H1 (cell line): ENCODE measurements at regions of chr14 and their contacts with region 1.

Region 1: GRCh38 chr14:52729925-52730667 is at the start of gene STYX:
- DNase-seq: peak; percentile 94 to 97
- H3K4me3 ChIP-seq: peak within 1 kb of the TSS; percentile 91 to 97 (median 94)
- H3K27ac ChIP-seq: peak within 1 kb of the TSS; percentile 79
- H3K4me1 ChIP-seq: peaks cover 0 to 4% (median 3%) of the 10 kb centered on the region in 4 experiments; a peak in 4 of 7 replicates
- H3K27me3 ChIP-seq: no peaks in the 10 kb centered on the region
- CTCF ChIP-seq: peak in 1 of 3 experiments; percentile 2; a peak in 1 of 4 replicates
- EP300 ChIP-seq: no peak
- POLR2A ChIP-seq: peak; percentile 91 to 94
- RAD21 ChIP-seq: 0 out of 4 replicates have a peak, but pooled peaks of 1 of the 2 experiments have one; percentile 3
- total RNA-seq, gene STYX: 26.6 and 29.0 TPM in 2 replicates

Region 2: DNA sequence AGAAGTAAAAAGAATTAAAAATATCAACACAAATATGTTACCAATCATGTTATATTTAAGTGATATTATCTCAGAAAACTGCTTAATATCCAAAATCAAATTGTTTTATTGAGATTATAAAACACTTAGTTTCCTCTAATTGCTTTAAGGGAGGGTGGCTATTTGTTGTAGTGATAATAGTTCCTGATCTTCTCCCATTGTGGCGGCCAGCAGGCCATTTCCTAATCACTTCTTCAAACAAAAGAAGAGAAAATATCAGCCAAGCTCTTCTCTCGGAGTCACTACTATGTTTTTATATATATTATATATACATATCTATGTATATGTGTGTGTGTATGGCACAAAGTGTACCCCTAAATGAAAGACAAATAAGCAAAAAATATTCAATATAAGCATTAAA is 66.2 kb before region 1 on chr14:
- CTCF ChIA-PET with region 1: no interaction called
- POLR2A ChIA-PET with region 1: no interaction called
- DNase-seq: peak in 1 of 2 experiments; percentile 17
- H3K4me3 ChIP-seq: no peak overlapping the region
- H3K27ac ChIP-seq: no peak overlapping the region
- H3K4me1 ChIP-seq: no peaks in the 10 kb centered on the region
- H3K27me3 ChIP-seq: no peaks in the 10 kb centered on the region
- CTCF ChIP-seq: no peak
- EP300 ChIP-seq: no peak
- POLR2A ChIP-seq: no peak
- RAD21 ChIP-seq: no peak

Region 3: GRCh38 chr14:52695481-52696091 is 34.5 kb before region 1 on chr14 and contains the start of gene ERO1A:
- CTCF ChIA-PET with region 1: interaction called, 3 read pairs
- POLR2A ChIA-PET with region 1: interaction called, 10 read pairs
- DNase-seq: peak in 1 of 2 experiments; percentile 82
- H3K4me3 ChIP-seq: peak within 1 kb of the TSS; percentile 83 to 94 (median 88)
- H3K27ac ChIP-seq: peak within 1 kb of the TSS; percentile 54; the same call in 1 of the 2 replicates
- H3K4me1 ChIP-seq: peaks cover 0 to 3% (median 0%) of the 10 kb centered on the region in 4 experiments; a peak in 2 of 7 replicates
- H3K27me3 ChIP-seq: no peaks in the 10 kb centered on the region
- CTCF ChIP-seq: no peak
- EP300 ChIP-seq: peak in 1 of 2 experiments; percentile 40; a peak in 1 of 3 replicates
- POLR2A ChIP-seq: peak in 1 of 2 experiments; percentile 43; a peak in 2 of 3 replicates
- RAD21 ChIP-seq: no peak
- total RNA-seq, gene ERO1A: 36.5 and 42.0 TPM in 2 replicates

Region 4: DNA sequence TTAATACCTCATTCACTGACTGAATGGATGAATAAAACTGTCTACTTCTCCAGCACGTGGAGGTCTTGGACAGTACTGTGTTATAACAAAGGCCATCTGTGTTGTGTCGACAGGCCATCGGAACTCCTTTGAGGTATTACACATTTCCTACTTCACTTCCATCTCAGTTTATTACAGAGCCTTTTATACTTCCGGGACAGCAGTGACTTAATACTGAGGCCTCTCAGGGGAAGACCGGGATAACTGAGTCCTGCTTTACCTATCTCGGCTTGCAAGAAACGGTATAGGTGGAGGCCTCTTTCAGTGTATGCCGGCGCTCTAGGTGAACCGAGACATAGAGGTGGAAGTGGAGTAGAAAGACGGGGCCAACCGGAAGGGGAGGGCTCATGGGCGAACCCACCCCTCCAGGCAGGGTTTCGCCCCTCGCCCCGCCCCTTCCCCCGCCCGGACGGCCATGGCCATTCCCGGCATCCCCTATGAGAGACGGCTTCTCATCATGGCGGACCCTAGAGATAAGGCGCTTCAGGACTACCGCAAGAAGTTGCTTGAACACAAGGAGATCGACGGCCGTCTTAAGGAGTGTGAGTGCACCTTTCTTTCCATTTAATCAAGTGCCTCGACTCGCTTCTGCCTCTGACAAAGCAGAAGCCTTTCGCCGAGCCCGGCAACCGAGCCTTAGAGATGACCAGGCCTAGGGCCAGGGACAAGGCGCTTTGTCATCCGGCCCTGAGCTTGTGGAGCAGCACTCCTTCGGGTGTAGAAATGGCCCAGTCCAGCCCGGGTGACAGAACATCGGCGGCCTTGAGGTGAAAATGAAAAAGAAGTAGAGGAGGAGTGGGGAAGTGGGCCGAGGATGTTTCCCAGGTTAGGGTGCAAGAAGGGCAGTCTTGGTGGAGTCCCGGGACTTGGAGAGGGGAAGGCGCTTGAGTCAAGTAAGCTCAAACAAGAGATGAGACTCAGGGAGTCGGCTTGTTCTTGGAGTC is 23.1 kb before region 1 on chr14 and contains the start of gene PSMC6:
- CTCF ChIA-PET with region 1: interaction called, 5 read pairs
- POLR2A ChIA-PET with region 1: interaction called, 17 read pairs
- DNase-seq: peak; percentile 68 to 92
- H3K4me3 ChIP-seq: peak within 1 kb of the TSS; percentile 85 to 99 (median 94)
- H3K27ac ChIP-seq: peak within 1 kb of the TSS; percentile 94
- H3K4me1 ChIP-seq: peaks cover 0 to 3% (median 1%) of the 10 kb centered on the region in 4 experiments; a peak in 1 of 7 replicates
- H3K27me3 ChIP-seq: no peaks in the 10 kb centered on the region
- CTCF ChIP-seq: no peak
- EP300 ChIP-seq: no peak
- POLR2A ChIP-seq: peak; percentile 58 to 95
- RAD21 ChIP-seq: no peak
- total RNA-seq, gene PSMC6: 103 and 107 TPM in 2 replicates

Region 5: DNA sequence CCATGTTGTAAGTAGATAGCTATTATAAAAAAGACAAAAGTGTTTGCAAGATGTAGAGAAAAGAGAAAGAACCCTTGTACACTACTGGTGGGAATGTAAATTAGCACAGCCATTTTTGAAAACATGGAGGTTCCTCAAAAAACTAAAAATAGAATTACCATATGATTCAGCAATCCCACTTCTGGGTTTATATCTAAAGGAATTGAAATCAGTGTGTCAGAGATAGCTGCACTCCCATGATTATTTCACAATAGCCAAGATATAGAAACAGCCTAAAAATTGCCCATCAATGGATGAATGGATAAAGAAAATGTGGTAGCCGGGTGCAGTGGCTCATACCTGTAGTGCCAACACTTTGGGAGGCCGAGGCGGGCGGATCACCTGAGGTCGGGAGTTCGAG is 13.9 kb before region 1 on chr14:
- CTCF ChIA-PET with region 1: interaction called, 5 read pairs
- POLR2A ChIA-PET with region 1: interaction called, 12 read pairs
- DNase-seq: no peak
- H3K4me3 ChIP-seq: no peak overlapping the region
- H3K27ac ChIP-seq: no peak overlapping the region
- H3K4me1 ChIP-seq: no peaks in the 10 kb centered on the region
- H3K27me3 ChIP-seq: no peaks in the 10 kb centered on the region
- CTCF ChIP-seq: no peak
- EP300 ChIP-seq: no peak
- POLR2A ChIP-seq: no peak
- RAD21 ChIP-seq: no peak

Region 6: DNA sequence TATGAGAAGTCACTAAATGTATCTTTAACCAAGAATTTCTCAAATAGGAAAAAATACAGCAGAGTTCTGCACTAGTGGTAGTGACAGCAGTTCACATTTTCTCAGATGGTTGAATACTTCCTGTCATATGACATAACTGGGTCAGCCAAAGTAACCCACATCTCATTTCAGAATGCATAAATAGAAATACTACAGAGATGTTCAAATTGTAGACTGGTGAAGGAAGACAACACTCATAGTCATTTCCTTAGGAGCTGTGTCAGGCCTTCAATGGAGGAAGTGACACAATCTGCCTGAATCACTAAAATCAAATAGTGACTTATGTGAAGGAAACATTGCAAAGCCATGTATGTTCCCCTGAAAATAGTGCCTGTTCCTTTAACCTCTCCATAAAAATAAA is 188.4 kb after region 1 on chr14:
- CTCF ChIA-PET with region 1: no interaction called
- POLR2A ChIA-PET with region 1: no interaction called
- DNase-seq: no peak
- H3K4me3 ChIP-seq: no peak overlapping the region
- H3K27ac ChIP-seq: no peak overlapping the region
- H3K4me1 ChIP-seq: peaks cover 0 to 2% (median 0%) of the 10 kb centered on the region in 4 experiments; a peak in 1 of 7 replicates
- H3K27me3 ChIP-seq: no peaks in the 10 kb centered on the region
- CTCF ChIP-seq: no peak
- EP300 ChIP-seq: no peak
- POLR2A ChIP-seq: no peak
- RAD21 ChIP-seq: no peak